Activated T-helper 1 cell treated with anti-CD3 and anti-CD28 coated beads, Interleukin-12 subunit alpha, Interleukin-12 subunit beta, Interleukin-2, Interleukin-4 antibody, amounts not matched to agents 30 ng/mL and 10 ng/mL and 1 ng/mL, durations not matched to agents 14 hours and 24 hours and 36 hours (primary cell): ENCODE measurements at regions of chr11 and their contacts with region 1.

Region 1: GRCh38 chr11:2532704-2533586 is 88.1 kb downstream of the KCNQ1 start:
- DNase-seq: peak; percentile 80
- H3K4me3 Mint-ChIP-seq: peak overlapping the region; percentile 69
- H3K27ac Mint-ChIP-seq: no peak overlapping the region
- H3K4me1 Mint-ChIP-seq: peaks cover 13% of the 10 kb centered on the region
- H3K27me3 Mint-ChIP-seq: peaks cover 2% of the 10 kb centered on the region

Region 2: DNA sequence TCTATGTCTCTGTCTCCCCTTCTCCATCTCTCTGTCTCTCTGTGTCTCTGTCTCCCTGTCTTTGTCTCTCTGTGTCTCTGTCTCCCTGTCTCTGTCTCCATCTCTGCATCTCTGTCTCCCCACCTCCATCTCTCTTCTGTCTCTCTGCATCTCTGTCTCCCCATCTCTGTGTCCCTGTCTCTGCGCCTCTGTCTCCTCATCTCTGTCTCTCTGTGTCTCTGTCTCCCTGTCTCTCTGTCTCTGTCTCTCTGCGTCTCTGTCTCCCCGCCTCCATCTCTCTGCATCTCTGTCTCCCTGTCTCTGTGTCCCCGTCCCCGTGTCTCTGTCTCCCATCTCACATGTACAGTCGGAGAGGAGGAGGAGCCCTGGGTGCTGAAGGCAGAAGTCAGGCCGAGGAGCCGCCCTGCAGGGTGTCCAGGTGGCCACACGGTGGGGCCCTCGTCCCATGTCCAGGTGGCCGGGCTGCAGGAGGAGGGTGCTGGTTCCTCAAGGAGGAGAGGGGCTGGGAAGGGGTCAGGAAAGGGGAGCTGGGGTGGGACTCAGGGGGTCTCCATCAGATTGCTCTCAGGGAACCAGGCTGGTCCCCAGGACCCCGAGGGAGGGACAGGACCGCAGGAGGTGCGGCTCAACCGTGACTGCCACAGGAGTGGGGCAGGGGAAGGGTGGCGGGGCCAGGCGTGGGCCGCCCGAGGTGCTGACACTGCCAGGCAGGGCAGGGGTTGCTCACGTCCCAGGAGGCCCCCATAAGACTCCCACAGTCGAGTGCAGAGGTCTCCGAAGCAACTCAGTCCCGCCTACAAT is 335.8 kb before region 1 on chr11:
- intact Hi-C with region 1: loop called (anchors 10 kb)
- DNase-seq: peak; percentile 55
- H3K4me3 Mint-ChIP-seq: no peak overlapping the region
- H3K27ac Mint-ChIP-seq: peak overlapping the region; percentile 6
- H3K4me1 Mint-ChIP-seq: no peaks in the 10 kb centered on the region
- H3K27me3 Mint-ChIP-seq: peaks cover 4% of the 10 kb centered on the region

Region 3: DNA sequence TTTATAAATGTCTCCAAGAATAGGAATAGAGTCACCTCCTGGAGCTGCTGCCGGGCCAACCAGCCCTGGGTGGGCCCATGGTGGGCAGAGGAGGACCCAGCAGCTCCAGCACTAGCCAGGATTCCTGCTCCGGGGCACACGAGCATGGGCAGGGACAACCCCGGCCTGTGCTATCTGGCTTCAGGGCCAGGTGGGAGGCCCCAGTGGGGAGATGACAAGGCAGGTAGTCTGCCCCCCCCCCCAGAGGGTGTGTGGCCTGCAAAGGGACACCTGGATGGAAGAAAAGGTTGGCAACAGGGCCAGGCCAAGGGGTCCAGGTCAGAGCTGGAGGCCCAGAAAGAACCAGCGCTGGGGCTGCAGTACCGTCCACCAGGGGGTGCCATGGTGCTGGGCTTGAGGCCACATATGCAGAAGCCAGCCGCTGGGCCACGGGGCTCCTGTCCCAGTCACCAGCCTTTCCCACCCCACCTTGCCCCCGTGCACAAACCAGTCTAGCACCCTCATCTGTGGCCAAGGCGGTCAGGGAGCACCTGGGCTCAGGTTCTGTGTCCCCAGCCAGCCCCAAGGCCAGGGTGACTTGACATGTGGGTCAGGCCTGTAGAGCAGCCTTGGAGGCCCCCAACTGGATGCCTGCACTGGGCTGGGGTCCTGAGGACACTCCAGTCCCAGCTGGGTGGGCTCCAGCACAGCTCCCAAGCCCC is 227.7 kb before region 1 on chr11:
- intact Hi-C with region 1: loop called (anchors 1 kb)
- DNase-seq: peak; percentile 69
- H3K4me3 Mint-ChIP-seq: no peak overlapping the region
- H3K27ac Mint-ChIP-seq: peak overlapping the region; percentile 86
- H3K4me1 Mint-ChIP-seq: peaks cover 33% of the 10 kb centered on the region
- H3K27me3 Mint-ChIP-seq: no peaks in the 10 kb centered on the region

Region 4: DNA sequence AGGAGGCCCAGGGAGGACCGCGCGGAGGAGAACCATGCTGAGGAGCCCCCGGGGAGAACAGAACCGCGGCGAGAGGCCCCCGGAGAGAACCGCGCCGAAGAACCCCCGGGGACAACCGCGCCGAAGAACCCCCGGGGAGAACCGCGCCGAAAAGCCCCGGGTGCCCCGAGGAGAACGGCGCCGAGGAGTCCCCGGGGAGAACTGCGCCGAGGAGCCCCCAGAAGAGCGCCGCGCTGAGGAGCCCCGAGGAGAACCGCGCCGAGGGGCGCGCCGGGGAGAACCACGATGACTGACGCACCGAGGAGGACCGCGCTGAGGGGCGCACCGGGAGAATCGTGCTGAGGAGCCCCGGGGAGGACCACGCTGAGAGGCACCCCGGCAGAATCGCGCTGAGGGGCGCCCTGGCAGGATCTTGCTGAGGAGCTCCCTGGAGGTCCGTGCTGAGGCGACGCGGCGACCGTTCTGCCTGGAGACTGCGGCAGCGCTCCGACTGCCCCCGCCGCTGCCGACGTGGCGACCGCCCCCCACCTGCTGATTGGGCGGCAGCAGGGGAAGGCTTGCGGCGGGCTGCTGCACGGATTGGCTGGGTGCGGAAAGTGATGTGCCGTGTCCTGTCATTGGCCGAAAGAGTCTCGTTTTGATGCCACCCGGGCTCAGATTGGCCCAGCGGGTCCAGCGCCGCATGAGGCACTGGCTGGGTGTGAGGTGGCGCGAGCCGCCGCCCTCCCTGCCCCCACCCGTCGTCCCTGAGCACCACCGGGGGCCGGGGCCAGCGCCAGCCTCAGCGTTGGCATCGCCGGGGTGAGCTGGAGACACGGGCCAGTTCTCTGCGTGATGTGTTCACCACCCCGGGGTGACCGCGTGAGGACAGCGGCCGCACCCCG is 166.8 kb after region 1 on chr11 and contains the start of gene KCNQ1OT1:
- intact Hi-C with region 1: loop called (anchors 5 kb)
- DNase-seq: peak; percentile 85
- H3K4me3 Mint-ChIP-seq: peak within 1 kb of the TSS; percentile 88
- H3K27ac Mint-ChIP-seq: peak within 1 kb of the TSS; percentile 74
- H3K4me1 Mint-ChIP-seq: peaks cover 11% of the 10 kb centered on the region
- H3K27me3 Mint-ChIP-seq: peaks cover 2% of the 10 kb centered on the region
- total RNA-seq, gene KCNQ1OT1: 0.66 and 0.67 TPM in 2 replicates

Region 5: GRCh38 chr11:2892215-2893020 is 359.5 kb after region 1 on chr11:
- intact Hi-C with region 1: loop called (anchors 1 kb)
- DNase-seq: peak; percentile 54
- H3K4me3 Mint-ChIP-seq: peak overlapping the region; percentile 83
- H3K27ac Mint-ChIP-seq: peak overlapping the region; percentile 83
- H3K4me1 Mint-ChIP-seq: peaks cover 9% of the 10 kb centered on the region
- H3K27me3 Mint-ChIP-seq: peaks cover under 1% of the 10 kb centered on the region

Region 6: GRCh38 chr11:2930704-2931428 is 397.9 kb after region 1 on chr11:
- intact Hi-C with region 1: loop called (anchors 1 kb)
- DNase-seq: no peak
- H3K4me3 Mint-ChIP-seq: peak overlapping the region; percentile 78
- H3K27ac Mint-ChIP-seq: peak overlapping the region; percentile 77
- H3K4me1 Mint-ChIP-seq: peaks cover 15% of the 10 kb centered on the region
- H3K27me3 Mint-ChIP-seq: peaks cover 12% of the 10 kb centered on the region

Region 7: GRCh38 chr11:3091791-3092602 is 559.1 kb after region 1 on chr11:
- intact Hi-C with region 1: loop called (anchors 1 kb)
- DNase-seq: peak; percentile 60
- H3K4me3 Mint-ChIP-seq: no peak overlapping the region
- H3K27ac Mint-ChIP-seq: no peak overlapping the region
- H3K4me1 Mint-ChIP-seq: no peaks in the 10 kb centered on the region
- H3K27me3 Mint-ChIP-seq: no peaks in the 10 kb centered on the region